Motor neuron (in vitro differentiated cells): ENCODE measurements at regions of chr6 and their contacts with region 1.

Region 1: DNA sequence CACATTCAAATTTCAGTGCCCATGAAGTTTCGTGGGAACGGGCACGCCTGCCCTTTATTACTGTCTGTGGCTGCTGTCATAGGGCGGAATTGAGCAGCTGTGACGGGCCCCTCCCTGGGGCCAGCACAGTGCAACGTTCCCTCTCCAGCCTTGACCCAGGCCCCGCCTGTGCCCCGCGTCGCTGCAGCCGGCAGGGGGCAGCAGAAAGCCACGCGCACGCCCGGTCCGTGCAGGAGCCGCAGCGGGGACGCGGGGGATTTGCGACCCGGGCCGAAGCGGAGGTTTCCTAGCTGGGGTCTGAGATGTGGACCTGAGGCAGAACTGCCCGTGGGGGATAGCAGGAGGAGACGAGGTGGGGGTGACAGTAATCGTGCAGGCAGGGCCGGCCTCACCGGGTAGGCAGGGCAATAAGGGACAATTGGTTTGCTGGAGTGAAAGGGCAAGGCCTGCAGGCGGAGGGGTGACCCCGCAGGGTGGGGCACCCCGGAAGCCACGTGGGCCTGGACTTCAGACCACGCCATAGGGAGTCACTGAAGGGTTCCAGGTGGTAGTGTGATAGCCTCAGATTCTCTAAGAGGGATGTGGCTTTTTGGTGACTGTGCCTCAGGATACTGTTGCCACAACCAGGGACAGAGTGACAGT is 54.4 kb downstream of the SYTL3 start:
- ATAC-seq: peak; percentile 93 to 100 (median 99)
- H3K4me3 ChIP-seq: peak overlapping the region; percentile 4 to 25 (median 19)
- H3K27ac ChIP-seq: no peak overlapping the region
- H3K4me1 ChIP-seq: peaks cover 3 to 5% of the 10 kb centered on the region in 2 donors

Region 2: GRCh38 chr6:156886409-156886808 is 1817.9 kb before region 1 on chr6:
- in situ Hi-C with region 1: no loop called
- ATAC-seq: peak in 4 of 8 experiments; percentile 28 to 44 (median 37)
- H3K4me3 ChIP-seq: no peak overlapping the region
- H3K27ac ChIP-seq: no peak overlapping the region
- H3K4me1 ChIP-seq: peaks cover 11 to 38% of the 10 kb centered on the region in 2 donors

Region 3: DNA sequence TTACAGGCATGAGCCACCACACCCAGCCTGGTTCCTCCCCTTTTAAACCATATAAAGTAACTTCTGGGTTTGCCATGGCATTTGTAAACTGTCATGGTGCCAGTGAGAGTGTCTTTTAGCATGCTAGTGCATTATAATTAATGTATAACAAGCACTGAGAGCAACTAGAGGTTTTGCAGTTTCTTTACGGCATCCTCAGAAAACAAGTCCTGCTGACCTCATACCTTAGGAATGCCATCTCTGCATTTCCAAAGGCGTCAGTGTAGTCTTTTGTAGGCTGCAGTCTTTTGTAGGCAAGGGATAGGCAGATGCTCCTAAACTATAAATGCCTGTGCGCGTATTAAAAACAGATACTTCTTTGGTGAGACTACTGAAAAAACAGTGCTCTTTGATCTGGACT is 189.9 kb after region 1 on chr6:
- in situ Hi-C with region 1: no loop called
- ATAC-seq: peak; percentile 35 to 96 (median 77)
- H3K4me3 ChIP-seq: no peak overlapping the region
- H3K27ac ChIP-seq: no peak overlapping the region
- H3K4me1 ChIP-seq: no peaks in the 10 kb centered on the region

Region 4: GRCh38 chr6:158962371-158962770 is 258.1 kb after region 1 on chr6:
- in situ Hi-C with region 1: loop called in 5 of 9 experiments (anchors 10 to 25 kb)
- ATAC-seq: no peak
- H3K4me3 ChIP-seq: no peak overlapping the region
- H3K27ac ChIP-seq: no peak overlapping the region
- H3K4me1 ChIP-seq: no peaks in the 10 kb centered on the region

Region 5: GRCh38 chr6:158972241-158973233 is 268.2 kb after region 1 on chr6:
- in situ Hi-C with region 1: loop called (anchors 10 to 25 kb)
- ATAC-seq: peak in 5 of 8 experiments; percentile 25 to 59 (median 42)
- H3K4me3 ChIP-seq: no peak overlapping the region
- H3K27ac ChIP-seq: no peak overlapping the region
- H3K4me1 ChIP-seq: no peaks in the 10 kb centered on the region

Region 6: DNA sequence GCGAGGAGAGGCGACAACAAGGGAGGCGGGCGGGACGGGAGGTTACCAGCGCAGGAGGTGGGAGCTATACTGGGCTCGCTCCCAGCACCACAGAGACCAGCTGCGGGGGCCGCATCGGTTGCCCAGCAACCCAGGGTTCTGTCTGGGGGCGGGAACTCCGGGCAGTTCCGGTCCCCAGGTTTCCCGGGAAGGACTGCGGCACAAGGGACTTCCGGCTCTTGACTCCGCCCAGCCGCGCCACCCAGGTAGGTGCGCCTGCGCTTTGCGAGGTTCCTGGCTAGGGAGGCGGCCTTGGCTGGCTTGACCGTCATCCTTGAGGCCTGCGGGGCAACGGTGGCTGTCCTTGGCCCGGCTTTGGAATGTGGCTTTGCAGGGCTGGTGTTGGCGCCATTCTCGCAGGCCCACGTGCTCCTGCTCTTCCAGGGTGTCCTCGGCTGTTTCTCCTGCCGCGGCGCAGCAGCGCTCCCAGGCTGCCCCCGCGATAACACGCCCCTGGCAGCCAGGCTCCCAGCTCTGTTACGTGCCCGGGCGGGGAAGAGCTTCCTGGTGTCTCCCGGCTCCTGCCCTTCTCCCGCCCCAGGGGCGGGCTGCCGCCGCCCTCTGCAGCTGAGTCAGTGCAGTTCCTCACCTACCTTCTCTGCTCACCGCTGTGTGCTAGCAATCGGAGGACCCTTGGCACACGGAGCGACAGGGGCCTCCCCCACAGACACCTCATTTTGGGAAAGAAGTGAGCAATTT is 295.5 kb after region 1 on chr6 and contains the start of gene RSPH3:
- in situ Hi-C with region 1: loop called in 1 of 9 experiments (anchors 25 kb)
- ATAC-seq: peak; percentile 87 to 94 (median 92)
- H3K4me3 ChIP-seq: peak within 1 kb of the TSS; percentile 52 to 77 (median 62)
- H3K27ac ChIP-seq: peak within 1 kb of the TSS; percentile 94 to 96
- H3K4me1 ChIP-seq: peaks cover 6 to 9% of the 10 kb centered on the region in 2 donors
- total RNA-seq, gene RSPH3: 2.8 to 13.7 (median 4.7) TPM

Region 7: GRCh38 chr6:159104163-159104925 is 400.0 kb after region 1 on chr6:
- in situ Hi-C with region 1: loop called in 1 of 9 experiments (anchors 25 kb)
- ATAC-seq: peak; percentile 81 to 97 (median 86)
- H3K4me3 ChIP-seq: no peak overlapping the region
- H3K27ac ChIP-seq: no peak overlapping the region
- H3K4me1 ChIP-seq: peaks cover 0 to 9% of the 10 kb centered on the region in 2 donors